PC-9 (cell line): ENCODE measurements at regions of chr12 and their contacts with region 1.

Region 1: DNA sequence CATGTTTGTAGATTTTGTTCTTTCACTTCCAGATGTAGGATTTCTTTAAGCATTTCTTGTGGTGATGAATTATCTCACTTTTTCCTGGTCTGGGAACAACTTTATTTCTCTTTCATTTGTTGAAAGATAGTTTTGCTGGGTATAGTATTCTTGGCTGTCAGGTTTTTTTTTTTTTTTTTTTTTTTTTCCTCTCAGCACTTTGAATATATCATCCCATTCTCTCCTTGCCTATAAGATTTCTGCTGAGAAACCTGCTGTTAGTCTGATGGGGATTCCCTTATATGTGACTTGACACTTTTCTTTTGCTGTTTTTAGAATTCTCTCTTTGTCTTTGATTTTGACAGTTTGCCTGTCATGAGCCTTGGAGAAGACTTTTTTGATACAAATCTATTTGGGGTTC is 30.5 kb downstream of the SMCO2 start:
- DNase-seq: no peak
- H3K4me3 ChIP-seq: no peak overlapping the region
- H3K27ac ChIP-seq: no peak overlapping the region
- H3K4me1 ChIP-seq: no peaks in the 10 kb centered on the region
- H3K27me3 ChIP-seq: no peaks in the 10 kb centered on the region
- CTCF ChIP-seq: no peak

Region 2: DNA sequence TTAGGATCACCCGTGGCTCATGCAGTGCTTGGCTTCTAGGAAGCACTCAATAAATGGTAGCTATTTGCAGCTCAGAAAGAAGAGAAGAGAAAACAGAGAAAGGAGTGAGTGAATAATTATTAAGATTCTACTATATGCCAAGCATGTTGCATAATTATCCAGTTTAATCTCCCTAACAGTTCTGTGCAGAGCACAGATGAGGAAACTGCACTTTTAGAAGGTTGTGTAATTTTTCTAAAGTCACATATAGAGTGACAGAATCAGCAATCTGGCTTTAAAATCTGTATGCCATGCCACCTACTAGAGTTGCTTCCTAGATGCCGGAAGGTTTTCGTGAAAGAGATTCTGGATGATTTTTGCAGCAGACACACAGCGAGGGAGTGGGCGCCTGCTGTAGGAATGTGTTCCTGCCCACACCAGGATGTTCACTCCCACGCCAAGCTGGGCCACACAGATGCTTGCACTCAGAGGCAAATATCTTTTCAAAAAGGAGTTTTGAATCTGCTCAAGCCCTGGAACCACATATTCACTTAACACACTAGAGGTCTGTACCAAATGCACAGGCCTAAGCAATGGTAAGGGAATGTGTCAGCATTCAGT is 80.7 kb before region 1 on chr12:
- CTCF ChIA-PET with region 1: no interaction called
- POLR2A ChIA-PET with region 1: interaction called, 23 read pairs
- intact Hi-C with region 1: no loop called
- DNase-seq: no peak
- H3K4me3 ChIP-seq: no peak overlapping the region
- H3K27ac ChIP-seq: no peak overlapping the region
- H3K4me1 ChIP-seq: no peaks in the 10 kb centered on the region
- H3K27me3 ChIP-seq: no peaks in the 10 kb centered on the region
- CTCF ChIP-seq: no peak

Region 3: DNA sequence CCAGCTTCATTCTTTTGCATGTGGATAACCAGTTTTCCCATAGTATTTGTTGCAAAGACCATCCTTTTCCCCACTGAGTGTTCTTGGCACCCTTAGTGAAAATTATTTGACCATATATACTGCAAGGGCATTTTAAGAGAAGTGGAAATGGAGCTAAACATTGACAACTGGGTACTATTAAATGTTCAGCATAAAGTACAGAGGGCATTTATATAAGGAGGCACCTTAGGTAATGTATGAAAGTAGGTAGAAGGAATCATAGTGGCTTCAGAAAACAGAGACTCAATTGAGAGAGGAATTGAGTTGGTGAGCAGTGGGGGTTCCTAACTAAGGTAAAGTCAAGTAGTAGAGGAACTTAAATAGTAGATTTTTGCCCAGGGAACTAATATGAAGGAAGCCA is 65.0 kb before region 1 on chr12:
- CTCF ChIA-PET with region 1: no interaction called
- POLR2A ChIA-PET with region 1: no interaction called
- intact Hi-C with region 1: no loop called
- DNase-seq: no peak
- H3K4me3 ChIP-seq: no peak overlapping the region
- H3K27ac ChIP-seq: no peak overlapping the region
- H3K4me1 ChIP-seq: no peaks in the 10 kb centered on the region
- H3K27me3 ChIP-seq: no peaks in the 10 kb centered on the region
- CTCF ChIP-seq: no peak

Region 4: DNA sequence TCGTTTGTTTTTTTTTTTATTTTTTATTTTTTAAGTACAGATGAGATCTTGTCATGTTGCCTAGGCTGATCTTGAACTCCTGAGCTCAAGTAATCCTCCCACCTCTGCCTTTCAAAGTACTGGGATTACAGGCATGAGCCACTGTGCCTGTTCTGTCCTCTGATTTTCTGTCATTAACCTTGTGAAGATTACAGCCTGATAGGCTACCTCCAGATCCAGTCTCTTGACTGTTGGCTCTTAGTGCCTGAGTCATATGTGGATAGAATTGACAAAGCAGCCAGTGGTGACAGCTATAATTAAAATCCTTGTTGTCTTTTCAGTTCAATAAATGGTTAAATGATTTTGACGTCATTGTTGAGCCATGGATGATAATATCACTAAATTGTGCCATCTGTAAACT is 197.9 kb after region 1 on chr12:
- CTCF ChIA-PET with region 1: interaction called, 12 read pairs
- POLR2A ChIA-PET with region 1: no interaction called
- intact Hi-C with region 1: no loop called
- DNase-seq: no peak
- H3K4me3 ChIP-seq: no peak overlapping the region
- H3K27ac ChIP-seq: no peak overlapping the region
- H3K4me1 ChIP-seq: no peaks in the 10 kb centered on the region
- H3K27me3 ChIP-seq: no peaks in the 10 kb centered on the region
- CTCF ChIP-seq: no peak